MCF 10A (cell line): ENCODE measurements at regions of chr17 and their contacts with region 1.

Region 1: GRCh38 chr17:45060797-45061605 is at the start of gene NMT1:
- DNase-seq: peak; percentile 100
- H3K4me3 Mint-ChIP-seq: peak within 1 kb of the TSS; percentile 84
- H3K27ac Mint-ChIP-seq: peak within 1 kb of the TSS; percentile 94
- H3K4me1 Mint-ChIP-seq: peaks cover 5% of the 10 kb centered on the region
- H3K27me3 Mint-ChIP-seq: no peaks in the 10 kb centered on the region
- CTCF ChIP-seq: no peak
- total RNA-seq, gene NMT1: 85.3 and 89.7 TPM in 2 replicates

Region 2: DNA sequence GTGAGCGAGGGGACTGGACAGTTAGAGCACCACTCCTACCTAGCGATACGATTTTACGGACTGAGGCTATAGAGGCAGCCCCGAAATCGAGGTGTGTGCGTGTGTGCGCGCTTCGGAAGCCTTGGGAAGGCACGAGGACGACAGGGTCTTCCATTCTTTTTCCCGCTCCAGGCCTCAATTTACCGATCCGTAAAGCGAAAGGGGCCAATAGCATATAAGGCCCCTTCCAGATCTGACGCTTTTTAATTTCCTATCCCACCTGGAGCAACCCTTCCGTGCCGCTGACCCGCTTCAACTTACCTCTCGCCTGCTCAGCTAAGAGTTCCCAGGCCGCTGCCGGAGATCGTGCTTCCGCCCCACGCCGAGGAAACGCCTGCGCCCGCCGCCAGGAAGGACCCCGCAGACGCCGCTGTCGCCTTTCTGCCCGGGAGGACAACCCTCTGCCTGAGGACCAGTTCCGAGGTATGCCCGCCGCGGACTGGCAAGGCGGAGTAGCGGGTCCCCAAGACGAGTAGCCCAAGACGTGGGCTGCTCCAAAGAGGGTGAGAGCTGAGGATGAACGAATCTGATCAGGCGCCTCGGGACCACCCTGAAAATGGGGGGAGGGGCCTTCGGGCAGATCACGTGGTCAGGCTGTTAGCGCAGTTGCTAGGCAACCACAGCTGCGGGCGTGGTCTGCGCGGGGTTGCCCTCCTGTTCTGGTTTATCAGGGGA is 161.8 kb before region 1 on chr17 and contains the start of gene EFTUD2:
- CTCF ChIA-PET with region 1: no interaction called
- POLR2A ChIA-PET with region 1: interaction called, 15 read pairs
- intact Hi-C with region 1: no loop called
- DNase-seq: peak; percentile 87
- H3K4me3 Mint-ChIP-seq: peak within 1 kb of the TSS; percentile 80
- H3K27ac Mint-ChIP-seq: peak within 1 kb of the TSS; percentile 99
- H3K4me1 Mint-ChIP-seq: peaks cover 21% of the 10 kb centered on the region
- H3K27me3 Mint-ChIP-seq: no peaks in the 10 kb centered on the region
- CTCF ChIP-seq: no peak
- total RNA-seq, gene EFTUD2: 119 and 125 TPM in 2 replicates

Region 3: DNA sequence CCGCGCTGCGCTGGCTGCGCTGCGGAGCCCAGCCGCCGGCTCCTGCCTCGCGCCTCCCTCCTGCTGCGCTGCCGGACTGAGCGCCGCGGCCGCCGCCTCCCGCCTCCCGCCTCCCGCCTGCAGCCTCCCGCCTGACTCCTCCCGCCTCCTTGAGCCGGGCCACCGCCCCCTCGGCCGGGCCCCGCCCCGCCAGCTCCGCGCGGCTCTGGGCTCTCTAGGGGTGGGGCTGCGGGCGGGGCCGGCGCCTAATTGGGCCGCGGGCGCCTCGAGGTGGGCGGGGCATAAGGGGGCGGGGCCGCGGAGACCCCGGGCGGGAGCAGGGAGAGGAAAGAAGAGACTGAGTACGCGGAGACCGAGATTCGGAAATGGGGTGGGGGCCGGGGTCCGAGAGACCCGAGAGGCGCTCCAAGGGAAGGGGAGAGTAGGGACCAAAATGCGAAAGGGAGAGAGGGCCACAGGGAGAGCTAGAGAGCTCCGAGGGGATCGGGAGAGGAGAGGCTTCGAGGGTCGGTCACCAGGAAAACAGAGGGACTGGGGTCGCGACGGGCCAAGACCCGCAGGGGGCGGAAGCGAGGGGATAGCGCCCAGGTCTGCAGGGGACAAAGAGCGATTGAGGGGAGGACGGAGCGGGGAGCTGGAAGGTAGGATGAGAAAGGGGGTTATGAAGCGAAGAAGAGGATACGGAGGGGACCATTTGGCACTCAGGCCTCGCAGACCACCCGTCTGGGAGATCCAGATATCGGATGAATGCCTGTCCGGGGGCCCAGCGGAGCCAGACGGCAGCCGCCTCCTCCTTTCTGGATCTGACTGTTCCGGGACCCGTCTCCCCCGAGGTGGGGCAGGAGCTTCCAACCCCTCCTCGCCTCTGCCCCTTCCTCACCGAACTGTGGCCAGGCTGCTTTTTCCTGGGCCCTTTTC is 92.5 kb before region 1 on chr17 and contains the start of gene C1QL1:
- CTCF ChIA-PET with region 1: no interaction called
- POLR2A ChIA-PET with region 1: no interaction called
- intact Hi-C with region 1: no loop called
- DNase-seq: peak; percentile 92
- H3K4me3 Mint-ChIP-seq: peak within 1 kb of the TSS; percentile 76
- H3K27ac Mint-ChIP-seq: no peak within 1 kb of the TSS
- H3K4me1 Mint-ChIP-seq: peaks cover 30% of the 10 kb centered on the region
- H3K27me3 Mint-ChIP-seq: no peaks in the 10 kb centered on the region
- CTCF ChIP-seq: no peak
- total RNA-seq, gene C1QL1: 0.56 and 0.96 TPM in 2 replicates

Region 4: DNA sequence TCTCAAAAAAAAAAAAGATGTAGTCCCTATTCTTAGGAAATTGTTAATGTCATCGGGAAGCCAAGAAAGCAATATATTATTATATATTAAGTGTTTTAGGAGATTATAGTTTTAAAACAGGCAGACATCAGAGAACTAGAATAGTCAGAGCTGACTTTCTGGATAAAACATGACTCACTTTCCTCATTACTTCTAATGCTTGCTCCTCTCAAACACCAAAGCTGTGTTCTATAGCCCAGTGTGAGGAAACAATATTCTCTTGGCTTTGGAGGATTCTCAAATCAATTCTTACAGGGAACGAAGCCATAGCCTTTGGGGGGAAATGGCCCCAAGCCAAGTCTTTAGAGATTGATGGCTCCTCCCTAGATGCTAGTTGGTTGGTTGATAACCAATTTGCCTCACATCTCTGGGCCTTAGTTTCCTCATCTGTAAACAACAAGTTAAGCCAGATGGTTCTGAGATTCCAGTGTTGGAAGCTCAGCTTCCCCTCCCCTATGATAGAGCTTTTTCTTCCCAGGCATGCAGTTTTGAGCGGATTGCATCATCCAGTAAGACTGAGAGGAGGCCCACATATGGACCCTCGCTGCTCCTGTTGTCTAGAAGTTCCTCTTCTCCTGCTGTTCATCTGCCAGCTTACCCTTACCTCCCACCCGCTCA is 12.5 kb after region 1 on chr17:
- CTCF ChIA-PET with region 1: interaction called, 5 read pairs
- POLR2A ChIA-PET with region 1: interaction called, 27 read pairs
- intact Hi-C with region 1: no loop called
- DNase-seq: no peak
- H3K4me3 Mint-ChIP-seq: no peak overlapping the region
- H3K27ac Mint-ChIP-seq: peak overlapping the region; percentile 25
- H3K4me1 Mint-ChIP-seq: peaks cover 16% of the 10 kb centered on the region
- H3K27me3 Mint-ChIP-seq: no peaks in the 10 kb centered on the region
- CTCF ChIP-seq: no peak

Region 5: GRCh38 chr17:45092932-45093430 is 32.0 kb after region 1 on chr17:
- CTCF ChIA-PET with region 1: interaction called, 8 read pairs
- POLR2A ChIA-PET with region 1: interaction called, 54 read pairs
- intact Hi-C with region 1: no loop called
- DNase-seq: peak; percentile 96
- H3K4me3 Mint-ChIP-seq: peak overlapping the region; percentile 44
- H3K27ac Mint-ChIP-seq: peak overlapping the region; percentile 98
- H3K4me1 Mint-ChIP-seq: peaks cover 25% of the 10 kb centered on the region
- H3K27me3 Mint-ChIP-seq: no peaks in the 10 kb centered on the region
- CTCF ChIP-seq: no peak

Region 6: GRCh38 chr17:45123930-45124796 is 63.2 kb after region 1 on chr17:
- CTCF ChIA-PET with region 1: no interaction called
- POLR2A ChIA-PET with region 1: interaction called, 10 read pairs
- intact Hi-C with region 1: no loop called
- DNase-seq: peak; percentile 89
- H3K4me3 Mint-ChIP-seq: peak overlapping the region; percentile 35
- H3K27ac Mint-ChIP-seq: peak overlapping the region; percentile 91
- H3K4me1 Mint-ChIP-seq: peaks cover 42% of the 10 kb centered on the region
- H3K27me3 Mint-ChIP-seq: no peaks in the 10 kb centered on the region
- CTCF ChIP-seq: no peak